Prostate gland (tissue), 2 donors: ENCODE measurements at regions of chr3 and their contacts with region 1.

Region 1: DNA sequence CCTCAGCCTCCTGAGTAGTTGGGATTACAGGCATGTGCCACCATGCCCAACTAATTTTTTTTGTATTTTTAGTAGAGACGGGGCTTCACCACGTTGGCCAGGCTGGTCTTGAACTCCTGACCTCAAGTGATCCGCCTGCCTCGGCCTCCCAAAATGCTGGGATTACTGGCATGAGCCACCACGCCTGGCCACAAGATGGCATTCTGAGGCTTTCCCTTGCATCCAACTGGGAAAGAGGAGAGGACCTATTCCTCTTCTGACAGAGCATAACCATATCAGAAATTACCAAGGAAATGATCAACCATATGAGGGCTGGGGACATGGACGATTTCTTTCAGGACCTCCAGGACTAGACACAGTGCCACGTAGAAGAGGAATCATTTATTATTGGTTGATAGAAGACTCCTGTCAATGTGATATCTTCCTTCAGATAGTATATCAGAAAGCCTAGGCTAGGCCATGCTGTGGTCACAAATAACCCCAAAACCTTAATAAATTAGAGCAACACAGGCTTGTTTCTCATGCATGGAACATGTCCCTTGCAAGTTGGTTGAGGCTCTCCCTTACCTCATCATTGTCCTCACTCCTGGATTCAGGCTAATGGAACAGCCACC is 372.3 kb upstream of the IL12A start:
- DNase-seq: peak; percentile 8
- H3K4me3 ChIP-seq: no peak overlapping the region
- H3K27ac ChIP-seq: no peak overlapping the region
- H3K4me1 ChIP-seq: no peaks in the 10 kb centered on the region
- H3K27me3 ChIP-seq: no peaks in the 10 kb centered on the region
- CTCF ChIP-seq: peak; percentile 23 to 69 (median 56)
- POLR2A ChIP-seq: no peak

Region 2: GRCh38 chr3:159732172-159733111 is 116.1 kb after region 1 on chr3:
- intact Hi-C with region 1: loop called (anchors 10 kb)
- DNase-seq: peak; percentile 7
- H3K4me3 ChIP-seq: no peak overlapping the region
- H3K27ac ChIP-seq: no peak overlapping the region
- H3K4me1 ChIP-seq: no peaks in the 10 kb centered on the region
- H3K27me3 ChIP-seq: no peaks in the 10 kb centered on the region
- CTCF ChIP-seq: no peak
- POLR2A ChIP-seq: no peak

Region 3: DNA sequence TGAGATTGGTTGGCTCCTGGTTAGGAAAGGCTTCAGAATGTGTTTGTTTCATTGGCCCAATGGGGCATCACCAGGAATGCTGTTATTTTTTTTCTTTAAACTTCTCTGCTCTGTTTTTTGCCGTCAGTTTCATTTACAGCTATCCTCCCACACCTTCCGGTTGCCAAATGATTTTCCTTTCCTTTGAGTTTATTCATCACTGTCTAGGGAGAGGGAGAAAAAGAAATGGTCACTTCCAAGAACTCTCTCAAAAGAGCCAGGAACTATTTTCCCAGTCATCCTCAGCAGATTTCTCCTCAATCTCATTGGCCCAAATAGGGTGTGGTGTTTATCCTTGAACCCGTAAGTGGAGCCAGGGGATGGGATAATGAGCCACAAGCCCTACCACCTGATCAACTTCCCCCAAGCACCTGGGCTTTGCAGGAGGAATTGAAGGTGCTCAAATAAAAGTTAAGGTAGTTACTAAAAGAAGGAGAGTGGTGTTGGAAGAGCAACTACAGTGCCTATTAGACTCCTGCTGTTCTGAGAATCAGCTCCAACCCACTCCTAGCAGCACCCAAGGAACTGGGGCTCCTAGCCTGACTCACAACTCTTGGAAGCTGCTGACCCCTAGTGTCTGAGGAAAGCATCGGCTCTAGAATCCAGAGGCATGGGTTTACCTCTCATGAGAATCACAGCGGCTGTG is 188.5 kb after region 1 on chr3:
- intact Hi-C with region 1: loop called (anchors 1 kb)
- DNase-seq: peak; percentile 64
- H3K4me3 ChIP-seq: no peak overlapping the region
- H3K27ac ChIP-seq: no peak overlapping the region
- H3K4me1 ChIP-seq: no peaks in the 10 kb centered on the region
- H3K27me3 ChIP-seq: no peaks in the 10 kb centered on the region
- CTCF ChIP-seq: peak; percentile 56 to 88 (median 76)
- POLR2A ChIP-seq: no peak

Region 4: DNA sequence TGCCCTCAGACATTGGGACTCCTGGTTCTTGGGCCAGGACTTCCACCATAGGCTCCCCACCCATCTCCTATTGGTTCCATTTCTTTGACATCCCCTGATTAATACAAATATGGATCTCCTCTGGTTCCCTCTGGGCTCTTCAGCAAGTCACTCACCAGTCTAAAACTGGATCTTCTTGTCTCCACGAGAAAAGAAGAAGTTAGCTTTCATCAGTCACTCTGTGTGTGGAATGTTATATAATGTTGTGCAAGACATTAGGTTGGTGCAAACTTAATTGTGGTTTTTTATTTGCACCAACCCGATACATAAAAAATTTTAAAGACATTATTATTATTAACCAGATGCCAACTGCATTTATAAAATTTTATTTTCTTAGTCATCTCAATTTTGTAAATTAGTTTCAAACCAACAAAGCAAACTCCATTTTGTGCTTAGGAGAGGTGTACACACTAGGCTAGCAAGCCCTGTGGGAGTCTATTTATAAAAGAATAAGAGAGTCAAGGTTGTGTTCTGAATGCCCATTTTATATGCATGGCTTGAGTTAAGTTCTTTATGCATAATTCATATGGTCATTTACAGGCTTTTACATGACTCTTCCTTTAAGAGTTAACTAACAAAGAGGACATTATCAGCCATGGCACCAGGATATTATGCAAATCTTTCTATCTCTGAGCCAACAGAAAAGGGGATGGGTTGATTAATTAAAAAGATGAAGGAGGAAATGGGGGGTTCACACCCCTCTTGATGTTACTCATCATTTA is 337.2 kb after region 1 on chr3:
- intact Hi-C with region 1: no loop called
- DNase-seq: no peak
- H3K4me3 ChIP-seq: no peak overlapping the region
- H3K27ac ChIP-seq: no peak overlapping the region
- H3K4me1 ChIP-seq: no peaks in the 10 kb centered on the region
- H3K27me3 ChIP-seq: no peaks in the 10 kb centered on the region
- CTCF ChIP-seq: no peak
- POLR2A ChIP-seq: no peak